ENCODE measurements at regions of chr5 and their contacts with region 1.

Region 1: GRCh38 chr5:43140286-43140685 is 19.6 kb downstream of the ZNF131 start:
- DNase-seq: no peak
- H3K4me3 Mint-ChIP-seq: no peak overlapping the region
- H3K27ac Mint-ChIP-seq: peak overlapping the region; percentile 30
- H3K4me1 Mint-ChIP-seq: peaks cover 45% of the 10 kb centered on the region
- H3K27me3 Mint-ChIP-seq: no peaks in the 10 kb centered on the region

Region 2: DNA sequence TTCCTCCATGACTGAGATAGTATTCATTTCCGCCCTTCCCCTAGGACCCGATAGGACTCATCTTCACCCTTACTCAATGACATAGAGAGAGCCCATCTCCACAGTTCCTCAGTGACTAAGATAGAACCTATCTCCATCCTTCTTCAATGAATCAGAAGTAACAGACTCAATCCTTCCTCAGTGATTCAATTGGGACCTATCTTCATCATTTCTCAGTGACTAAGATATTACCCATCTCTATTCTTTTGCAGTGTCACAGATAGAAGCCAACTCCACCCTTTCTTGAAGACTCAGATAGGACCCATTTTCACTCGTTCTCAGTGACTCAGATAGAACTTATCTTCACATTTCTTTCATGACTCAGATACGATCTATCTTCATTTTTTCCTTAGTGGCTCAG is 1050.6 kb before region 1 on chr5:
- CTCF ChIA-PET with region 1: no interaction called
- intact Hi-C with region 1: no loop called
- DNase-seq: no peak
- H3K4me3 Mint-ChIP-seq: no peak overlapping the region
- H3K27ac Mint-ChIP-seq: no peak overlapping the region
- H3K4me1 Mint-ChIP-seq: no peaks in the 10 kb centered on the region
- H3K27me3 Mint-ChIP-seq: no peaks in the 10 kb centered on the region

Region 3: GRCh38 chr5:42564689-42565356 is 575.5 kb before region 1 on chr5:
- CTCF ChIA-PET with region 1: no interaction called
- intact Hi-C with region 1: no loop called
- DNase-seq: no peak
- H3K4me3 Mint-ChIP-seq: no peak overlapping the region
- H3K27ac Mint-ChIP-seq: no peak overlapping the region
- H3K4me1 Mint-ChIP-seq: no peaks in the 10 kb centered on the region
- H3K27me3 Mint-ChIP-seq: peaks cover 11% of the 10 kb centered on the region

Region 4: DNA sequence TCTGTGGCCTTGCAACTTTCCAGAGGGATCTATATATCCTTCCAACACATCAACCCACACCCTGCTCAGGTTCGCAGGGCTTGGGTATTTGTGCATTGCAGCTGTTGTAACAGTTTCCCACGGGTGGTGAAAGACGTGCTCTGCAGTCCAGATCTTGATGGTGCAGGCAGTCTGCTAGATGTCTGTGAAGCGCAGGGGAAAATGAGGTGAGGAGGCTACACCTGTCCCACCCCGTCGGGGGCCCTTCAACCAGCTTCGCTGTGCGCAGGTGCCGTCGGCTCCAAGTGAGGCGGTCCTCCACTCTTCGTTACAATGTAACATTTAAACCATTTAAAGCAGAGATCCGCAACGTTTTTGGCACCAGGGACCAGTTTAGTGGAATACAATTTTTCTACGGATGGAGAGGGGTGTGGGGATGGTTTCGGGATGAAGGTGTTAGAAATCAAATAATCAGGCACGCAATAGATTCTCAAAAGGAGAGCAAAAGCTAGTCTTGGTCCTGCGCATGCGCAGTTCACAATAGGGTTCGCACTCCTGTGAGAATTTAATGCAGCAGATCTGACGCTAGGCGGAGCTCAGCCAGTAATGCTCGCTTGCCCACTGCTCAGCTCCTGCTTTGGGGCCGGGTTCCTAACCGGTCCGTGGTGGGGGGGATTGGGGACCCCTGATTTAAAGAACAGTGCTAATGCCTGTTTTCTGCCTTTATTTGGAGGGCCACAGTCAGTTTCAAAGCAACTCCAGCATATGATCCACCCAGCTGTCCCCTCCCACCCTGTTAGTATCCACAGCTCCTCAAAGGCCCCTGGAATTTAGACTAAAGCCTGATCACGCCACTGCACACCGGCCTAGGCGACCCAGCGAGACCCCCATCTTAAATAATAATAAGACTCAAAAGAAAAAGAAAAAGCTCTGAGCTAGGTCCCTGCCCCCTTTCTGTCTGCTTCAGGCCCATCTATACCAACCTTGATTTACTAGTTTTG is 231.5 kb before region 1 on chr5:
- CTCF ChIA-PET with region 1: no interaction called
- intact Hi-C with region 1: no loop called
- DNase-seq: peak; percentile 94
- H3K4me3 Mint-ChIP-seq: peak overlapping the region; percentile 92
- H3K27ac Mint-ChIP-seq: peak overlapping the region; percentile 75
- H3K4me1 Mint-ChIP-seq: peaks cover 10% of the 10 kb centered on the region
- H3K27me3 Mint-ChIP-seq: peaks cover 10% of the 10 kb centered on the region

Region 5: GRCh38 chr5:43110606-43111442 is 29.5 kb before region 1 on chr5:
- CTCF ChIA-PET with region 1: interaction called, 6 read pairs
- intact Hi-C with region 1: loop called (anchors 1 kb)
- DNase-seq: peak; percentile 81
- H3K4me3 Mint-ChIP-seq: no peak overlapping the region
- H3K27ac Mint-ChIP-seq: peak overlapping the region; percentile 71
- H3K4me1 Mint-ChIP-seq: peaks cover 43% of the 10 kb centered on the region
- H3K27me3 Mint-ChIP-seq: no peaks in the 10 kb centered on the region

Region 6: GRCh38 chr5:43161244-43161643 is 21.0 kb after region 1 on chr5:
- CTCF ChIA-PET with region 1: interaction called, 3 read pairs
- intact Hi-C with region 1: loop called (anchors 2 kb)
- DNase-seq: peak; percentile 38
- H3K4me3 Mint-ChIP-seq: no peak overlapping the region
- H3K27ac Mint-ChIP-seq: peak overlapping the region; percentile 44
- H3K4me1 Mint-ChIP-seq: peaks cover 24% of the 10 kb centered on the region
- H3K27me3 Mint-ChIP-seq: no peaks in the 10 kb centered on the region

Region 7: DNA sequence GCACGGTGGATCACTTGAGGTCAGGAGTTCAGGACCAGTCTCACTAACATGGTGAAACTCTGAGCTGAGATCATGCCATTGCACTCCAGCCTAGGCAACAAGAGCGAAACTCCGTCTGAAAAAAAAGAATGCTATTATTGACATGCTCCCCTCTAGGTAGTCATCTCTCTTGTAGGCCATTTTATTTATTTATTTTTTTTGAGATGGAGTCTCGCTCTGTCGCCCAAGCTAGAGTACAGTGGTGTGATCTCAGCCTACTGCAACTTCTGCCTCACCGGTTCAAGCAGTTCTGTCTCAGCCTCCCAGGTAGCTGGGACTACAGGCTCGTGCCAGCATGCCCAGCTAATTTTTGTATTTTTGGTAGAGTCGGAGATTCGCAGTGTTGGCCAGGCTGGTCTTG is 31.2 kb after region 1 on chr5:
- CTCF ChIA-PET with region 1: interaction called, 11 read pairs
- intact Hi-C with region 1: no loop called
- DNase-seq: no peak
- H3K4me3 Mint-ChIP-seq: no peak overlapping the region
- H3K27ac Mint-ChIP-seq: no peak overlapping the region
- H3K4me1 Mint-ChIP-seq: peaks cover 2% of the 10 kb centered on the region
- H3K27me3 Mint-ChIP-seq: no peaks in the 10 kb centered on the region